Endothelial cell of umbilical vein (primary cell): ENCODE measurements at regions of chr11 and their contacts with region 1.

Region 1: GRCh38 chr11:73795925-73796632 is 8.4 kb downstream of the MRPL48 start:
- DNase-seq: no peak
- H3K4me3 ChIP-seq: no peak overlapping the region
- H3K27ac ChIP-seq: no peak overlapping the region
- H3K4me1 ChIP-seq: no peaks in the 10 kb centered on the region
- H3K27me3 ChIP-seq: no peaks in the 10 kb centered on the region
- CTCF ChIP-seq: no peak
- POLR2A ChIP-seq: no peak

Region 2: DNA sequence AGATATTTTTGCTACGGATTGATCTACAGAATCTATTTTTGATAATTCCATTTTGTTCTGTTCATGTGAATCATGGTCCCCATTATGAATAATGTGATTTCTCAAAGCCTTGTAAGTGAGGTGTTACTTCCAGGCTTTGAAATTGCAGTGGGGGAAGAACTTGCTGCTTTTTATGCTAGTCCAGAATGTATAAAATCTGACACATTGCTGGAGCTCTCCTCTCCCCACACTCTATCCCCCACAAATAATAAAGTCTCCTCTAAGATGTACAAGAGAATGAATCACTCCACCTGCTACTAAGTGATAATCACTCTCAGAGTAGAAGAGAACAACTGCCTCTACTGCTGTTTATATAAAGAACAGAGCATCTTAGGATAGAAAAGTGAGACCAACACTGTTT is 29.3 kb before region 1 on chr11:
- CTCF ChIA-PET with region 1: no interaction called
- POLR2A ChIA-PET with region 1: interaction called, 11 read pairs
- dilution Hi-C with region 1: no loop called
- intact Hi-C with region 1: no loop called
- DNase-seq: no peak
- H3K4me3 ChIP-seq: no peak overlapping the region
- H3K27ac ChIP-seq: no peak overlapping the region
- H3K4me1 ChIP-seq: no peaks in the 10 kb centered on the region
- H3K27me3 ChIP-seq: peaks cover 1 to 23% of the 10 kb centered on the region in 2 experiments
- CTCF ChIP-seq: no peak
- POLR2A ChIP-seq: no peak

Region 3: GRCh38 chr11:73833067-73833466 is 37.0 kb after region 1 on chr11:
- CTCF ChIA-PET with region 1: interaction called, 3 read pairs
- POLR2A ChIA-PET with region 1: no interaction called
- dilution Hi-C with region 1: no loop called
- intact Hi-C with region 1: loop called (anchors 5 kb)
- DNase-seq: no peak
- H3K4me3 ChIP-seq: no peak overlapping the region
- H3K27ac ChIP-seq: no peak overlapping the region
- H3K4me1 ChIP-seq: no peaks in the 10 kb centered on the region
- H3K27me3 ChIP-seq: no peaks in the 10 kb centered on the region
- CTCF ChIP-seq: no peak
- POLR2A ChIP-seq: no peak